Activated CD4-positive, alpha-beta memory T cell treated with anti-CD3 and anti-CD28 coated beads, Interleukin-2, amount 10 ng/mL, durations not matched to agents 7 days and 5 days (primary cell): ENCODE measurements at regions of chr3 and their contacts with region 1.

Region 1: GRCh38 chr3:128153156-128154041 is at the start of gene EEFSEC:
- DNase-seq: peak; percentile 86
- H3K4me3 Mint-ChIP-seq: peak within 1 kb of the TSS; percentile 93
- H3K27ac Mint-ChIP-seq: peak within 1 kb of the TSS; percentile 70
- H3K4me1 Mint-ChIP-seq: peaks cover 16% of the 10 kb centered on the region
- H3K27me3 Mint-ChIP-seq: no peaks in the 10 kb centered on the region
- total RNA-seq, gene EEFSEC: 14.5 to 15.0 TPM

Region 2: GRCh38 chr3:128123538-128124368 is 29.6 kb before region 1 on chr3 and contains the start of gene RUVBL1:
- CTCF ChIA-PET with region 1: interaction called, 19 read pairs
- POLR2A ChIA-PET with region 1: interaction called, 46 read pairs
- DNase-seq: peak; percentile 98
- H3K4me3 Mint-ChIP-seq: peak within 1 kb of the TSS; percentile 97
- H3K27ac Mint-ChIP-seq: peak within 1 kb of the TSS; percentile 86
- H3K4me1 Mint-ChIP-seq: peaks cover 31% of the 10 kb centered on the region
- H3K27me3 Mint-ChIP-seq: no peaks in the 10 kb centered on the region
- total RNA-seq, gene RUVBL1: 56.3 to 62.3 TPM

Region 3: GRCh38 chr3:128133273-128134084 is 19.9 kb before region 1 on chr3:
- CTCF ChIA-PET with region 1: interaction called, 11 read pairs
- POLR2A ChIA-PET with region 1: interaction called, 12 read pairs
- DNase-seq: peak; percentile 56
- H3K4me3 Mint-ChIP-seq: no peak overlapping the region
- H3K27ac Mint-ChIP-seq: no peak overlapping the region
- H3K4me1 Mint-ChIP-seq: no peaks in the 10 kb centered on the region
- H3K27me3 Mint-ChIP-seq: peaks cover 19% of the 10 kb centered on the region

Region 4: GRCh38 chr3:128178782-128179483 is 25.5 kb after region 1 on chr3:
- CTCF ChIA-PET with region 1: no interaction called
- POLR2A ChIA-PET with region 1: no interaction called
- DNase-seq: no peak
- H3K4me3 Mint-ChIP-seq: no peak overlapping the region
- H3K27ac Mint-ChIP-seq: no peak overlapping the region
- H3K4me1 Mint-ChIP-seq: peaks cover 5% of the 10 kb centered on the region
- H3K27me3 Mint-ChIP-seq: no peaks in the 10 kb centered on the region

Region 5: GRCh38 chr3:128456776-128457715 is 303.6 kb after region 1 on chr3:
- CTCF ChIA-PET with region 1: no interaction called
- POLR2A ChIA-PET with region 1: no interaction called
- DNase-seq: no peak
- H3K4me3 Mint-ChIP-seq: no peak overlapping the region
- H3K27ac Mint-ChIP-seq: no peak overlapping the region
- H3K4me1 Mint-ChIP-seq: no peaks in the 10 kb centered on the region
- H3K27me3 Mint-ChIP-seq: peaks cover 27% of the 10 kb centered on the region